CD8-positive, alpha-beta T cell (primary cell): ENCODE measurements at regions of chr1 and their contacts with region 1.

Region 1: DNA sequence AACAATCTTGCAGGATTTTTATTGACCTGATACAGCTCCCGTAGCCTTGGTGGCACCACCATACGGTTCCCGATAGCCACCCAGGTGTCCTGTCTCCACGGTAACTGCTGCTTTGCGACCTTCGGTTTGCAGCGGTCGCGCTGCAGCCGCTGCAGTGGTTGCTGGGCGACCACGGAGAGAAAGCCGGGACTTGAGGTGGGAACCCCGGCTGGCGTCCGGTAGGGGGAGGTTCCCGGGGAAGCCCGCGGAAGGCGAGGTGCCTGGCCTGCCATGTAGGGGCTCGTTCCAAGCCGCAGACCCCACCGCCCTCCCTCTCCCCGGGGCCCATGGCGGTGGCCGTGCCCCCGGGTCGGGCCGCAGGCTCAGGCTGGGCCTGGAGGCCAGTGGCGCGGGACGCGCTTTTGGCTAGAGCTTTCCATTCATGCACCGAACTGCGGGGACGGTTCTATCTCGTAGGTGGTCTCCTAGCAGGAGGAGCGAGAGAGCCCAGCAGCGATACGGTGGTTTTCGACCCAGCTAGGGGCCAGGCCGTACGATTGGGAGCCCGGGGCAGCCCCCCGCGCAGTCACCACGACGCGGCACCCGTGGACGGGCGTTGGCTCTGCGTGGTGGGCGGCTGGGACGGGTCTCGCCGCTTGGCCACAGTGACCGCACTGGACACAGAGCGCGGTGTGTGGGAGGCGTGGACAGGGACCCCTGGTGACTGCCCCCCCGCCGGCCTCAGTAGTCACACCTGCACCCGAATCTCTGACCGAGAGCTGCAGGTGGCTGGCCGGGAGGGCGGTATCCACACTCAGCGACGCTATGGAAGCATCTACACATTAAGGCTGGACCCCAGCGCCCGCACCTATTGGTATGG is at the start of gene KLHDC9:
- DNase-seq: peak; percentile 16 to 87 (median 68)
- ATAC-seq: peak; percentile 67
- H3K4me3 ChIP-seq: peak within 1 kb of the TSS; percentile 54 to 65
- H3K4me3 Mint-ChIP-seq: peak within 1 kb of the TSS; percentile 89
- H3K27ac ChIP-seq: peak within 1 kb of the TSS in 1 of 2 experiments; percentile 47
- H3K27ac Mint-ChIP-seq: peak within 1 kb of the TSS; percentile 92
- H3K4me1 ChIP-seq: peaks cover 14% of the 10 kb centered on the region
- H3K4me1 Mint-ChIP-seq: peaks cover 24% of the 10 kb centered on the region
- H3K27me3 ChIP-seq: no peaks in the 10 kb centered on the region
- H3K27me3 Mint-ChIP-seq: no peaks in the 10 kb centered on the region
- CTCF ChIP-seq: no peak
- total RNA-seq, gene KLHDC9: not detected

Region 2: DNA sequence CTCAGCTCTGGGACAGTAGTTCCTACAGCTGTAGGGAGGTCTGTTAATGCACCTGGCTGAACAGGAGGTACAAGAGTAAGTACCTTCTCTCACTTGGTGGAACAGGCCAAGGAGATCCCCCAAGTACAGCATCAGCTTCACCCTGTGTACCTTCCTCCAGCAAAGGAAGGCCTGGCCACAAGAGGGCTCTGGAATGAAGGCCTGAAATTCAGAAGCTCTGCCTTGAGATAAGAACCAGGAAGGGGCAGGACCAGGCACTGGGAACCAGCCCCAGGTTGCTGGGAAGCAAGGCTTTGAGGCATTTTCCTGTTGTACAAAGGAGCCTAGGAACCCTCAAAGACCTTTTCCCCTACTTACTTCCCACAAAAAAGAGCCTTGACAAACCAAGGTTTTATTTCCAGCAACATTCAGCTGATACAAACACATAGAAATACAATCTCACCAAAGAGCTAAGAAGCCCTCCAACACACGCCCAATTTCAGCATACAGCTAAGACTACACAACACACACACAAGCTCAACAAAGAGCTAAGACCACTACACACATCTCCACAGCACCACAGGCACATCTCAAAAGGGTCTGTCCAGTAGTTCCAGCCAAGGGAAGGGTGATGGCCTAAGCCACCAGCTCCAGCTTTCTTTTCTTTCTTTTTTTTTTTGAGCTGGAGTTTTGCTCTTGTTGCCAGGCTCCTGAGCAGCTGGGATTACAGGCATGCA is 101.0 kb before region 1 on chr1:
- CTCF ChIA-PET with region 1: interaction called, 72 read pairs
- POLR2A ChIA-PET with region 1: interaction called, 39 read pairs
- intact Hi-C with region 1: loop called (anchors 1 kb)
- DNase-seq: peak in 8 of 9 experiments; percentile 37 to 71 (median 56)
- ATAC-seq: peak; percentile 82
- H3K4me3 ChIP-seq: no peak overlapping the region
- H3K4me3 Mint-ChIP-seq: no peak overlapping the region
- H3K27ac ChIP-seq: no peak overlapping the region
- H3K27ac Mint-ChIP-seq: peak overlapping the region; percentile 29
- H3K4me1 ChIP-seq: no peaks in the 10 kb centered on the region
- H3K4me1 Mint-ChIP-seq: peaks cover 5% of the 10 kb centered on the region
- H3K27me3 ChIP-seq: no peaks in the 10 kb centered on the region
- H3K27me3 Mint-ChIP-seq: no peaks in the 10 kb centered on the region
- CTCF ChIP-seq: peak; percentile 30

Region 3: GRCh38 chr1:161038523-161039153 is 59.8 kb before region 1 on chr1 and contains the start of gene TSTD1:
- CTCF ChIA-PET with region 1: interaction called, 168 read pairs
- POLR2A ChIA-PET with region 1: interaction called, 20 read pairs
- intact Hi-C with region 1: loop called (anchors 1 kb)
- DNase-seq: peak; percentile 68 to 95 (median 86)
- ATAC-seq: peak; percentile 88
- H3K4me3 ChIP-seq: peak within 1 kb of the TSS; percentile 87 to 89
- H3K4me3 Mint-ChIP-seq: peak within 1 kb of the TSS; percentile 90
- H3K27ac ChIP-seq: peak within 1 kb of the TSS; percentile 75 to 83
- H3K27ac Mint-ChIP-seq: peak within 1 kb of the TSS; percentile 96
- H3K4me1 ChIP-seq: peaks cover 35% of the 10 kb centered on the region
- H3K4me1 Mint-ChIP-seq: peaks cover 56% of the 10 kb centered on the region
- H3K27me3 ChIP-seq: no peaks in the 10 kb centered on the region
- H3K27me3 Mint-ChIP-seq: no peaks in the 10 kb centered on the region
- CTCF ChIP-seq: no peak
- total RNA-seq, gene TSTD1: 44.8 to 46.6 TPM

Region 4: DNA sequence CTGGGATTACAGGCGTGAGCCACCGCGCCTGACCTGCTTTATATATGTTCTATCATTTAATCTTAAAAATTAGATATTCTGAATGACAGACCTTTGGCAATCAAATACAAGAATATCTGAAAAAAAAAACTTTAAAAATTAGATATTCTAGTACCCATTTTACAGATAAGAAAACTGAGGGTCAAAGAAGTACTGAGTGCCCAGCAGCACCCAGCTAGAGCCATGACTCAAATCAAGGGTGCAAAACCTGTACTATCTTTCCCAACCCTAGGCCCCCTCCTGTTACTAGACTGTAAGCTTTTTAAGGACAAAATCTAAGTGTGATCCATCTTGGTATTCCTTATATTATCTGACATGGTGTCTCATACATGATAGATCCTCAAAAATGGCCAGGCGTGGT is 37.0 kb before region 1 on chr1:
- CTCF ChIA-PET with region 1: interaction called, 198 read pairs
- POLR2A ChIA-PET with region 1: interaction called, 5 read pairs
- intact Hi-C with region 1: loop called (anchors 5 kb)
- DNase-seq: no peak
- ATAC-seq: no peak
- H3K4me3 ChIP-seq: no peak overlapping the region
- H3K4me3 Mint-ChIP-seq: no peak overlapping the region
- H3K27ac ChIP-seq: peak overlapping the region in 1 of 2 experiments; percentile 26
- H3K27ac Mint-ChIP-seq: peak overlapping the region; percentile 41
- H3K4me1 ChIP-seq: peaks cover 63% of the 10 kb centered on the region
- H3K4me1 Mint-ChIP-seq: peaks cover 69% of the 10 kb centered on the region
- H3K27me3 ChIP-seq: no peaks in the 10 kb centered on the region
- H3K27me3 Mint-ChIP-seq: no peaks in the 10 kb centered on the region
- CTCF ChIP-seq: no peak

Region 5: GRCh38 chr1:161117759-161118581 is 19.5 kb after region 1 on chr1 and contains the starts of genes NIT1 and PFDN2:
- CTCF ChIA-PET with region 1: interaction called, 13 read pairs
- POLR2A ChIA-PET with region 1: interaction called, 10 read pairs
- intact Hi-C with region 1: loop called (anchors 2 kb)
- DNase-seq: peak; percentile 67 to 93 (median 84)
- ATAC-seq: peak; percentile 72
- H3K4me3 ChIP-seq: peak within 1 kb of the TSS; percentile 95 to 96
- H3K4me3 Mint-ChIP-seq: peak within 1 kb of the TSS; percentile 93
- H3K27ac ChIP-seq: peak within 1 kb of the TSS; percentile 91 to 93
- H3K27ac Mint-ChIP-seq: peak within 1 kb of the TSS; percentile 95
- H3K4me1 ChIP-seq: peaks cover 43% of the 10 kb centered on the region
- H3K4me1 Mint-ChIP-seq: peaks cover 60% of the 10 kb centered on the region
- H3K27me3 ChIP-seq: no peaks in the 10 kb centered on the region
- H3K27me3 Mint-ChIP-seq: no peaks in the 10 kb centered on the region
- CTCF ChIP-seq: no peak
- total RNA-seq, gene NIT1: 11.5 to 12.8 TPM
- total RNA-seq, gene PFDN2: 64.7 to 75.5 TPM